T-cell (primary cell): ENCODE measurements at regions of chr10 and their contacts with region 1.

Region 1: GRCh38 chr10:11724938-11725776 is 17.0 kb upstream of the ECHDC3 start:
- DNase-seq: peak in 6 of 35 experiments; percentile 14 to 67 (median 22)
- ATAC-seq: peak in 3 of 4 experiments; percentile 56 to 77 (median 62)
- H3K4me3 ChIP-seq: no peak overlapping the region
- H3K4me3 Mint-ChIP-seq: no peak overlapping the region
- H3K27ac ChIP-seq: no peak overlapping the region
- H3K27ac Mint-ChIP-seq: no peak overlapping the region
- H3K4me1 ChIP-seq: no peaks in the 10 kb centered on the region
- H3K4me1 Mint-ChIP-seq: peaks cover 2 to 7% (median 3%) of the 10 kb centered on the region in 3 donors
- H3K27me3 ChIP-seq: peaks cover 0 to 8% of the 10 kb centered on the region in 2 experiments
- H3K27me3 Mint-ChIP-seq: peaks cover 5 to 8% of the 10 kb centered on the region in 2 donors

Region 2: GRCh38 chr10:11048707-11049278 is 676.4 kb before region 1 on chr10:
- CTCF ChIA-PET with region 1: no interaction called
- POLR2A ChIA-PET with region 1: interaction called in 1 of 2 experiments, 10 read pairs
- DNase-seq: no peak
- ATAC-seq: no peak
- H3K4me3 ChIP-seq: no peak overlapping the region
- H3K4me3 Mint-ChIP-seq: no peak overlapping the region
- H3K27ac ChIP-seq: no peak overlapping the region
- H3K27ac Mint-ChIP-seq: no peak overlapping the region
- H3K4me1 ChIP-seq: no peaks in the 10 kb centered on the region
- H3K4me1 Mint-ChIP-seq: peaks cover 0 to 7% (median 0%) of the 10 kb centered on the region in 3 donors
- H3K27me3 ChIP-seq: peaks cover 0 to 4% of the 10 kb centered on the region in 2 experiments
- H3K27me3 Mint-ChIP-seq: peaks cover 13 to 20% of the 10 kb centered on the region in 2 donors

Region 3: DNA sequence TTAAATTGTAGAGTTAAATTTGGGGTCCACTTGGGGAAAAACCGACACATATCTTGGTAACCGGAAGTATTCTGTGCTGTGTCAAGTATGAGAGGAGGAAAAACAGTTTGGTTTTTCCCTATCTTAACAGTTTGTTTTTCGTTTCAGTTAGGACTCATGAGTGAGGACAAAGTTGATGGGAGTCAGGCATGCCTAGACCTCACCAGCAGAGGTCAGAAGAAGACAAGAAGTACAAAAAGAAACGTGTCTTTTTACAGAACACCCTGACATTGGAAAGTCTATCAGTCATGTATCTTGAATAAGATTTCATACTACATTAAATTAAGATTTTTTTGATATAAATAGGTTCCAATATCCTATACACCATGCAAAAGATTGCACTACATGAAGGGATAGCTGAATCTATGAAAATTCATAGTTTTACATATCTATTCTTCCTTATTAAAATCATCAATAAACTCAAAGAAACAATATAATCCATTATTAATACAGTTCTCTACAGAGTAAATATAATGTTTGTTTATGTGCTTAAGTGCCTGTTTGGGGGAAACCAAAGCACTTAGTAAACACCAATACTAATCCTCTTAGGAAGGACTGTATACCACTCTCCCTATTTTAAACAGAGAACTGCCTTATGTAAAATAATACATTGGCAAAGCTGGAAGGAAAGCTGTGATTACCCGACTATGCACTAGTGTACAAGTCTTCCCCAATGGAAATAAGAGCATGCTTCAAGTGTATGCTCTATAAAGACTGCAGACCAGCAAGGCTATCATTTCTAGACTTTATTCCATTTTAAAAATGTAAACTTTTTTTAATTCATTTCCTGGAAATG is 209.3 kb before region 1 on chr10:
- CTCF ChIA-PET with region 1: interaction called, 6 to 18 read pairs
- POLR2A ChIA-PET with region 1: no interaction called
- DNase-seq: peak in 31 of 35 experiments; percentile 8 to 78 (median 35)
- ATAC-seq: peak; percentile 54 to 71 (median 62)
- H3K4me3 ChIP-seq: no peak overlapping the region
- H3K4me3 Mint-ChIP-seq: no peak overlapping the region
- H3K27ac ChIP-seq: no peak overlapping the region
- H3K27ac Mint-ChIP-seq: no peak overlapping the region
- H3K4me1 ChIP-seq: peaks cover 0 to 2% of the 10 kb centered on the region in 2 experiments
- H3K4me1 Mint-ChIP-seq: peaks cover 4 to 7% (median 4%) of the 10 kb centered on the region in 3 donors
- H3K27me3 ChIP-seq: no peaks in the 10 kb centered on the region
- H3K27me3 Mint-ChIP-seq: no peaks in the 10 kb centered on the region

Region 4: DNA sequence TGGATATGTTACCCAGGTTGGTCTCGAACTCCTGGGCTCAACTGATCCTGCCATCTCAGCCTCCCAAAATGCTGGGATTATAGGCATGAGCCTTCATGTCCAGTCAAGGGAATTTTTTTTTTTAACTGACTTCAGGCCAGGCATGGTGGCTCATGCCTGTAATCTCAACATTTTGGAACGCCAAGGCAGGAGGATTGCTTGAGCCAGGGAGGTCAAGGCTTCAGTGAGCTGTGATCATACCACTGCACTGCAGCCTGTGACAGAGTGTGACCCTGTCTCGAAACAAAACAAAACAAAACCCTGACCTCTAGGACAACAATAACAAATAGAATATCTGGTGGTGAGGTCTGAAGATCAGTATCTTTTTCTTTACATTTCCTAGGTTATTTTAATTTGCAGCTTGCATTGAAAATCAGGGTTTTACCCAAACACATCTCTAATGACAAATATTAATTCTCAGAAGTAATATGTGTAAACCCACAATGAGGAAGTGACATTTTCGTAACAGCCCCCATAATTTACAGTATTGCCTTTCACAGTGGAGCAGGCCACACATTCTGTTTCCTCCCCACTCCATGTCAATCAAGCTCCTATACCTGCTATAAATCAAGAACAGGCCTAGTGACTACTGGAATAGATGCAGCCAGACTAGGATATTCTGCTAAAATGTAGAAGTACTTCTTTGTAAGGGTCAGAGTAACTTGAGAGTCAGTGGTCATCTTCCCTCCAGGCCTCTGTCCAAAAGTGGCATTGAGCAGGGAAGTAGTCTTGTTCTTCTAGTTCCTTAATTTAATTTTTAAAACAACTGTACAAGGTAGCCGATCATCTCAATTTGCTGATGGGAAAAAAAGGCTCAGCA is 26.2 kb before region 1 on chr10:
- CTCF ChIA-PET with region 1: no interaction called
- POLR2A ChIA-PET with region 1: no interaction called
- DNase-seq: no peak
- ATAC-seq: no peak
- H3K4me3 ChIP-seq: no peak overlapping the region
- H3K4me3 Mint-ChIP-seq: no peak overlapping the region
- H3K27ac ChIP-seq: no peak overlapping the region
- H3K27ac Mint-ChIP-seq: no peak overlapping the region
- H3K4me1 ChIP-seq: peaks cover 0 to 8% of the 10 kb centered on the region in 2 experiments
- H3K4me1 Mint-ChIP-seq: peaks cover 0 to 20% (median 19%) of the 10 kb centered on the region in 3 donors
- H3K27me3 ChIP-seq: peaks cover 0 to 3% of the 10 kb centered on the region in 2 experiments
- H3K27me3 Mint-ChIP-seq: no peaks in the 10 kb centered on the region

Region 5: DNA sequence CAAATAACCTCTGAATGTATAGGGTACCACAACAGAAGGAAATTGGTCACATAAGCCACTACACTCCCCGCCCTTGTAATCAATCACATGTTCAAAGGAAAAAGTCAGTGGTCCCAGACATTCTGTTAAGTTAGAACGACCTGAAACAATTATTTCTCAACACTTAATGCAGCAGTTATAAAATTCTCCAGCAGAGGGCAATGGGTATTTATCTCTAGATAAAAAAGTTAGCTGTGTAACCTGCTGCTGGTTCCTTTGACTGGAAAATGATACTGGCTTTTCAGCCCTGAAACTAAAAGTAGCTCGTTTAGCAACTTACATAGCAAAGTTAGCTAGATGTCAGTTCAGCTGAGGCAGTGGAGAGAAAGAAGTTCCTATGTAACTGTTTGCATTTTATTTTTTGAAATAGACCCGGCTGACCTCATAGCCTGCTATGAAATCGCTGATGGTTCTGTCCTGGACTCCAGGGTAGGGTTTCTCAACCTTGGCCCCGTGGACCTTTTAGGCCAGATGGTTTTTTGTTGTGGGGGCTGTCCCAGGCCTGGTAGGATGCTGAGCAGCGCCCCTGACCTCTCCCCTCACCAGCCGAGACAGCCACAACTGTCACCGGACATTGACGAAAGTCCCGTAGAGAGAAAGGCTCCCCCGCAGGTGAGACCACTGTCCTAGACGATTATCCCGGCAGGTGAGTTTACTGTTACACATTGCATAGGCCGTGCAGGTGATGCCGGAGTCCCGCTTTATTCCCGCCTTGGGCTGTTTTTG is 57.8 kb after region 1 on chr10:
- CTCF ChIA-PET with region 1: no interaction called
- POLR2A ChIA-PET with region 1: no interaction called
- DNase-seq: peak in 2 of 35 experiments; percentile 9 to 66
- ATAC-seq: peak in 2 of 4 experiments; percentile 36 to 45
- H3K4me3 ChIP-seq: no peak overlapping the region
- H3K4me3 Mint-ChIP-seq: no peak overlapping the region
- H3K27ac ChIP-seq: no peak overlapping the region
- H3K27ac Mint-ChIP-seq: no peak overlapping the region
- H3K4me1 ChIP-seq: no peaks in the 10 kb centered on the region
- H3K4me1 Mint-ChIP-seq: no peaks in the 10 kb centered on the region
- H3K27me3 ChIP-seq: peaks cover 0 to 10% of the 10 kb centered on the region in 2 experiments
- H3K27me3 Mint-ChIP-seq: peaks cover 4 to 8% of the 10 kb centered on the region in 2 donors

Region 6: GRCh38 chr10:12628153-12628552 is 903.0 kb after region 1 on chr10:
- CTCF ChIA-PET with region 1: no interaction called
- POLR2A ChIA-PET with region 1: no interaction called
- DNase-seq: no peak
- ATAC-seq: no peak
- H3K4me3 ChIP-seq: no peak overlapping the region
- H3K4me3 Mint-ChIP-seq: no peak overlapping the region
- H3K27ac ChIP-seq: no peak overlapping the region
- H3K27ac Mint-ChIP-seq: no peak overlapping the region
- H3K4me1 ChIP-seq: peaks cover 0 to 3% of the 10 kb centered on the region in 2 experiments
- H3K4me1 Mint-ChIP-seq: peaks cover 13 to 22% (median 14%) of the 10 kb centered on the region in 3 donors
- H3K27me3 ChIP-seq: no peaks in the 10 kb centered on the region
- H3K27me3 Mint-ChIP-seq: no peaks in the 10 kb centered on the region